A549 (cell line): ENCODE measurements at regions of chr10 and their contacts with region 1.

Region 1: DNA sequence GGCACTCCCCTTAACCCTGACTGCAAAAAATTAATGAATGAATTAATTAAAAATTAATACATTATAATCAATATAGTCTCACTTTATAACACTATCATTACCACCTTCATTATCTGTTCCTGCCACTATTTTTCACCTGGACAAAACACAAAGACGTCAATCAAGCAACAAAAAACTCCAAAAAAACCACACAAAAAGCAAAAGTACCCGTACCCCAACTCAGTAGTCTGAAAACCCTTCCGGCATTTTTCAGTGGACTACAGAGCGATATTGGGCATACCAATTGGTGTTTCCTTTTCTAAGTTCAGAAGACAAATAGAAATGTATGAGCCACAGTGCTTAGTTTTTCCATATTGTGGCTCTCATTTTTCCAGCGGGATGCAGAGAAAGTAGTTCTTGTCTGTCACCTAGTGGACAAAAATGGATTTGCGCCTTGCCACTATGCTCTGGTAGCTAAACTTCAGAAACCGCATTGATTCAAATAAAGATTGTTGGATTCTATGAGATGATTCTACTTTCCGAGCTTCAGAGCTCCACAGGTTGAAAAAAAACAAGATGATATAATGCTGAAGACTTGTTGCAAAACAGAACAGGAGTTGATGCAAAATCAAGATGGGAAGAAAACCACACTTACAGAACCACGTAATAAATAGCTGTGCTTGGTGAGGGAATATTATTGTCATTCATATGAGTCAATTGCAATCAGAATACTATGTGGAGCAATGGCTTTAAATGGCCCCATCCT is 50.6 kb upstream of the ITGB1 start:
- DNase-seq: peak in 1 of 2 experiments; percentile 94
- ATAC-seq: peak; percentile 7 to 21; a peak in 5 of 6 replicates
- H3K4me3 ChIP-seq: no peak overlapping the region
- H3K27ac ChIP-seq: peak overlapping the region; percentile 98 to 99
- H3K4me1 ChIP-seq: peaks cover 73% of the 10 kb centered on the region
- CTCF ChIP-seq: peak; percentile 98
- EP300 ChIP-seq: peak; percentile 76 to 77; a peak in 2 of 5 replicates
- POLR2A ChIP-seq: no peak
- RAD21 ChIP-seq: peak; percentile 99

Region 2: DNA sequence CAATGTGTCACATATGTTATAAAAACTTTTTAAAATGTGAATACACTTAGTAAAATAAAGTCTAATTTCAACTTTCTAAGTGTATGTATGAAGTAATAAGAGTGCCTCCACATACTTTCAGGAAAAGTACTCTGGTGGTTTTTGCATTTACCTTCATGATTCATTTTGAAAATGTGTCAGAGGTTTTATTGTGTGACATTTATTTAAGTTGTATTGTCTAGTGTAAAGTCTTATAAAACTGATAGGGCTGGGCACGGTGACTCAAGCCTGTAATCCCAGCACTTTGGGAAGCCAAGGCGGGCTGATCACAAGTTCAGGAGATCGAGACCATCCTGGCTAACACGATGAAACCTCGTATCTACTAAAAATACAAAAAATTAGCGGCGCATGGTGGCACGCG is 277.1 kb before region 1 on chr10:
- CTCF ChIA-PET with region 1: no interaction called
- POLR2A ChIA-PET with region 1: no interaction called
- DNase-seq: no peak
- ATAC-seq: no peak
- H3K4me3 ChIP-seq: no peak overlapping the region
- H3K27ac ChIP-seq: no peak overlapping the region
- H3K4me1 ChIP-seq: no peaks in the 10 kb centered on the region
- CTCF ChIP-seq: no peak
- EP300 ChIP-seq: no peak
- POLR2A ChIP-seq: no peak
- RAD21 ChIP-seq: no peak

Region 3: GRCh38 chr10:32958085-32959005 is 50.3 kb before region 1 on chr10 and contains the start of gene ITGB1:
- CTCF ChIA-PET with region 1: interaction called, 59 read pairs
- POLR2A ChIA-PET with region 1: interaction called, 25 read pairs
- DNase-seq: peak; percentile 57 to 95
- ATAC-seq: peak; percentile 78 to 81
- H3K4me3 ChIP-seq: peak within 1 kb of the TSS; percentile 74
- H3K27ac ChIP-seq: peak within 1 kb of the TSS; percentile 99 to 100
- H3K4me1 ChIP-seq: peaks cover 42% of the 10 kb centered on the region
- CTCF ChIP-seq: no peak
- EP300 ChIP-seq: peak; percentile 57 to 77; a peak in 3 of 5 replicates
- POLR2A ChIP-seq: peak; percentile 61
- RAD21 ChIP-seq: peak; percentile 8 to 21; a peak in 2 of 5 replicates
- polyA plus RNA-seq, gene ITGB1: 1,667 and 2,408 TPM in 2 replicates

Region 4: DNA sequence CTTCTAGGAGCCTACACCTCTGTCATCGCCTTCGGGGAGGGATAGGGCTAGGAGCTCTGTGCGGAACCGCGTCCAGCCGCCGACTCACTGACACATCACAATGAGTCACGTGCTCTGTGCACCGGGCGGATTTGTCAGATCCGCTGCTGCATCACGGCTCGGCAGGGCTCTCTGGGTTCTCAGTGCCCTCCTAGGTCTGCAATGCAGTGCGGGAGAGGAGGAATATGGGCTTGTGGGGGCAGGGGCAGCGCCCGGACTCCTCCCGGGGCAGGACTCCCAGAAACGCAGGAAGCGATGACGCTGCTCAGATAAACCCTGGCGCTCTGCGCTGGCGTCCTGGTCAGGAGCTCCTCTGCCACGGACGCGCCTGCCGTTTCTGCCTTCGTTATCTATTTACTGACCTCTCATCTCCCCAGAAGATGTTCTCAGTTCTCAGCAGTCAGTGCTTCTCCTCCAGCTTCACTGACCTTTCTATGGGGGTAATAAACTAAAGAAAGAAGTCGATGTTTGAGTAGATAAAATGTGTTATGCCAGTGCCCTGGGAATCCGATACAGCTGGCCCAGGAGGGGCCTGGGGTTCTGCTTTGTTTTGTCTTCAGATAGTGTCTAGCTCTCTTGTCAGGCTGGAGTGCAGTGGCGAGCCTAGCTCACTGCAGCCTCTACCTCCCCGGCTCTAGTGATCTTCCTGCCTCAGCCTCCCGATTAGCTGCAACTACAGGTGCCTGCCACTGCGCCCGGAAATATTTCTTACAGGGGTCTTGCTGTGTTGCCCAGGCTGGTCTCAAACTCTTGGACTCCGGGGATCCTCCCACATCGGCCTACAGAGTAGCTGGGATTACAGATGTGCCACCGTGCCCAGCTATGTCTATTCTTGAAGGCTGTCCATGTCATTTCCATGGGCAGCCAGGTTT is 27.9 kb before region 1 on chr10:
- CTCF ChIA-PET with region 1: interaction called, 168 read pairs
- POLR2A ChIA-PET with region 1: interaction called, 163 read pairs
- DNase-seq: peak; percentile 72 to 100
- ATAC-seq: peak; percentile 87 to 91
- H3K4me3 ChIP-seq: peak overlapping the region; percentile 40
- H3K27ac ChIP-seq: peak overlapping the region; percentile 96 to 99
- H3K4me1 ChIP-seq: peaks cover 70% of the 10 kb centered on the region
- CTCF ChIP-seq: no peak
- EP300 ChIP-seq: peak; percentile 83 to 93; a peak in 3 of 5 replicates
- POLR2A ChIP-seq: peak; percentile 62
- RAD21 ChIP-seq: peak; percentile 39 to 57; a peak in 3 of 5 replicates

Region 5: DNA sequence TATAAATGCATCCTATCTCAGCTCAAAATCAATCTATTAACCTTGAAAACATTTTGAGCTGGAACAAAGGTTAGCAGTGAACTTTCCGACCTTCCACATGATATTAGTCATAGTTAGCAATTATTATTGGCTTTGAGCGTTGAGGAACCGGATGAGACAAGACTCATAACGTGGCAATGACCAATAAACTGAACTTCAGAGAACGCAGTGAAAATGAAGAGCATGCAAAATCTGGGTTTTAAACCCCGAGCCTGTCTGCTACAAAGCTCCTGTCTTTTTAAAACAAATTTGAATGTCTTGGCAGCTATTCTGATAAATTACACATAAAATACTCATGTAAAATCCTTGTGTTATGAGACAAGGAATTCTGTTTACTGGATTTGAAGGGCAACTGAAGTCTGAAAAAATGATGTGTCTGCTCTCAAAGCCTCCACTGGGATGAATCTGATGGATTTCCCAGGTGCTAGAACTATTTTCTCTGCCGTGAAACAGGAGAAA is 24.0 kb after region 1 on chr10:
- CTCF ChIA-PET with region 1: interaction called, 11 read pairs
- POLR2A ChIA-PET with region 1: interaction called, 3 read pairs
- DNase-seq: peak; percentile 44 to 75
- ATAC-seq: peak; percentile 65 to 84; a peak in 5 of 6 replicates
- H3K4me3 ChIP-seq: 0 out of 3 replicates have a peak overlapping the region, but pooled peaks have one; percentile 5
- H3K27ac ChIP-seq: peak overlapping the region; percentile 74 to 89
- H3K4me1 ChIP-seq: peaks cover 24% of the 10 kb centered on the region
- CTCF ChIP-seq: no peak; the same call in 2 of the 3 replicates
- EP300 ChIP-seq: peak in 1 of 2 experiments; percentile 70; a peak in 1 of 5 replicates
- POLR2A ChIP-seq: no peak
- RAD21 ChIP-seq: peak in 1 of 2 experiments; percentile 27; a peak in 2 of 5 replicates

Region 6: DNA sequence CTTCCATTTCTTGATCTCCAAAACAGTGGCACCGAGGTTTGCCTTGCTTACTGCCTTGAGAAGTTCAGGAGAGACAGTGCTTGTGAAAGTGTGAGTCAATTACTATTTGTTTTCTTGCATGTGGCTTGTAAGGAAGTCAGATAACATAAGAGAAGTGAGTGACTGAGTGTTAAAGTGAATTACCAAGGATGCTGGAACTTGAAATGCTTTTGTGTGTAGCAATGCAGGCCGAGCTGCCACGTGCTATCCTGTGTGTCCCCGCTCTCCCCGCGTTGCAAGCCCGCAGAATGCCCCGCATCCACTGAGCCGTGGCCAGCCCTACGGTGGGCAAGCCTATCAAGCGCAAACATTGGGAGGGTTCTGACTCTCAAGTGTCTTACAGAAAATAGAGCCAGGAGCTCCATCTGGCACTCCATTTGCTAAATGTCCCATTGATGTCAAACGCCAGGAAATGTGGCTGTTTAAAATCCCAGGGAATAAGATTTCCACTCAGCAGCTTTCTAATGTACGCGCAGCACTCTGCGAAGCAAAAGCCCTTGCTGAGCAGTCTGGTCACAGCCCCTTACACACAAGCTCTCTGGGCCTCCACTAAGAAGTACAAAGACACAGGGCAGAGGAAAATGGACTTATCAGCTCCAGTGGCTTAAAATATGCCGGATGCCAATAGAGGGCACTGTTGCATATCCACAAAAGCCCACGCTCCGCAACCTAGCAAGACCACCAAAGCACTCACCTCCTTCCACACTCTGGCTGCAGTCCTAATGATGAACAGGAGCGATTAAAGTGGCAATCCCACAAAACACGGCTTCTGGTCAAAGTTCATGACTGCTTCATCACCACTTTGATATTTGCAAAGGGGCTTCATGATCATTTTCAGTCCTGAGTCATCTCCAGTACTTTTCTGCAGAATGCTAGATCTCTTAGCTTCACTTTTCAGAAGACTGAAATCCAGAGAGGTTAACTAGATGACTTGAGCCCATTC is 107.4 kb after region 1 on chr10:
- CTCF ChIA-PET with region 1: interaction called, 19 read pairs
- POLR2A ChIA-PET with region 1: no interaction called
- DNase-seq: peak in 1 of 2 experiments; percentile 67
- ATAC-seq: peak; percentile 67 to 82; a peak in 5 of 6 replicates
- H3K4me3 ChIP-seq: no peak overlapping the region
- H3K27ac ChIP-seq: peak overlapping the region; percentile 68 to 84
- H3K4me1 ChIP-seq: peaks cover 38% of the 10 kb centered on the region
- CTCF ChIP-seq: peak; percentile 64
- EP300 ChIP-seq: no peak
- POLR2A ChIP-seq: no peak
- RAD21 ChIP-seq: peak; percentile 58 to 69

Region 7: DNA sequence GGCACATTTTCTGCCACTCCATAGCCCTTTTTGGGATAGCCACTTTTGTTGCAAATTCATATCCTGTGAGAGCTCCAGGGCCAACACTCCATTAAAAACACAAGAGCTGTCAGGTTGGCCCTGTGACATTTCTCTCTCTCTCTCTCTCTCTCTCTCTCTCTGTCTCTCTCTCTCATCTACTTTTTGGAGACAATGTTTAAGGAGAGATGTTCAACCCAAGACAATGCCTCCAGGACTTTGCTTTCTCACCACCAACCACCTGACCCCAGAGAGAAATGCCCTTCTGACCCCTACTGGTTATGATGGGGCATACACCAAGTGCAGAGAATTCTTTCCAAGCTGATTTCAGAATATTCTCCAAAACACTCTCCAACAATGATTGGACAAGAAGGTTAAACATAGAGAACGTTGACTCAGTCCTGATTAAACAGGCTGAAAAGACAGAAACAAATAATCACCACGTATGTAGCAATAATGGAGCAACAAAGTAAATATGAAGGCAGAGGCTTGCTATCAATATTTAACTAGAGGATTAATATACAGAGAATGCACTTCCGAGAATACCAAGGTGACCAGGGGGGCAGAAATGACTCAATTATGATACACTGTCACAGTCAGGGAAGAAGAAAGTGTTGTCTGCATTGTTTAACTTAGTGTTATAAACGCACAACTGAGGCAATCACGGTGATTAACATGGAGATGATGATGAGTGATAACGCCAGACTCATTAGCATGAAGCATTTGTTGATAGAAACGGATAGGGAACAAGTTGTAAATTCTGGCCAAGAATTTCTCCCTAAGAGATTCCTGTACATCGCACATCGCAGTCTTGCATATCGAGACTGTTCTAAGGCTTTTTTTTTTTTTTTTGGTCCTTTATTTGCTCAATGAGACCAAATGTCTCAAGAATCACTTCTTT is 147.3 kb after region 1 on chr10:
- CTCF ChIA-PET with region 1: interaction called, 88 read pairs
- POLR2A ChIA-PET with region 1: interaction called, 11 read pairs
- DNase-seq: peak; percentile 89 to 98
- ATAC-seq: peak; percentile 95
- H3K4me3 ChIP-seq: no peak overlapping the region; the same call in 2 of the 3 replicates
- H3K27ac ChIP-seq: peak overlapping the region; percentile 87 to 89
- H3K4me1 ChIP-seq: peaks cover 27% of the 10 kb centered on the region
- CTCF ChIP-seq: peak; percentile 94
- EP300 ChIP-seq: peak; percentile 100
- POLR2A ChIP-seq: no peak
- RAD21 ChIP-seq: peak; percentile 98 to 99

Region 8: GRCh38 chr10:33715303-33715975 is 706.8 kb after region 1 on chr10:
- CTCF ChIA-PET with region 1: no interaction called
- POLR2A ChIA-PET with region 1: no interaction called
- DNase-seq: no peak
- ATAC-seq: no peak
- H3K4me3 ChIP-seq: no peak overlapping the region
- H3K27ac ChIP-seq: 0 out of 6 replicates have a peak overlapping the region, but pooled peaks of 1 of the 2 experiments have one; percentile 6
- H3K4me1 ChIP-seq: no peaks in the 10 kb centered on the region
- CTCF ChIP-seq: no peak
- EP300 ChIP-seq: no peak
- POLR2A ChIP-seq: no peak
- RAD21 ChIP-seq: no peak